ENCODE measurements at regions of chr3 and their contacts with region 1.

Region 1: DNA sequence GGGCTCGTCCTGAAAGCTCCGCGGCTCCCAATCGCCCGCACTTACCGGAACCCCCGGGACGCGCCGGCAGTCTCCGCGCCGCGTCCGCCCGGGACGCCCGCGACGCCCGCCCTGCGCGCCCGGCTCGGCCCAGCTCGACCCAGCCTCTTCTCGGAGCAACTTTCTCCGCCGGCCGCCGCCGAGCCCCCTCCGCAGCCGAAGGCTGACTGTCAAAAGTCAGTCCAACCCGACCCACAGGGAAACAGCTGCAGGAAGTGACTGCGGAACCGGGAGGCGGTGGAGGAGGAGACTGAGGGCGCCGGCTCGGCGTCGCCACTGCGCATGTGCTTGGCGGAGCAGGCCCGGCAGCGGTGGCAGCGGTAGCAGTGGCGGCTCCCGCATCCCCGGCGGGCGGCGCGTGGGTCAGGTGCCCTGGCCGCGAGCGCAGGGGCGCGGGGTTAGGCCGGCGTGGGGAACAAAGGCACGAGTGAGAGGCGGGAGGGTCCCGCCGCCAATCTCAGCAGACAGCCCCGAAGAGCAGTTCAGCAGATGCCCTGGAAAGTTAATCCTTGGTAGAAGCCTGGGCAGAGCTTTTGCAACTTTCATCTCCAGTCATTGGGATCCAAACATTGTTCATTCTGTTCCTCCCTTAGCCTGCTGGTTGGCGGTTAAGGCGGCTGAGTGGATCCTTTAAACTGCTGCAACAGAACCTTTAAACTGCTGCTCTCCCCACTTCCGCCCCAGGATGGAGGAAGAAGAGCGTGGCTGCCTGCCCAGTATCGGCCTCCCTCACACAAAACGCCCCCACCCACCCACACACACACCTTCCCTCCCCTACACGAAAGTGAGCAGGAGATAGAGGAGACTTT is at the start of gene ZMAT3:
- DNase-seq: peak; percentile 90
- ATAC-seq: peak; percentile 79
- H3K4me3 ChIP-seq: peak within 1 kb of the TSS; percentile 61 to 85 (median 80)
- H3K4me3 Mint-ChIP-seq: peak within 1 kb of the TSS; percentile 100
- H3K27ac ChIP-seq: peak within 1 kb of the TSS; percentile 89 to 92
- H3K27ac Mint-ChIP-seq: peak within 1 kb of the TSS; percentile 96
- H3K4me1 ChIP-seq: peaks cover 36 to 41% of the 10 kb centered on the region in 2 donors
- H3K4me1 Mint-ChIP-seq: peaks cover 63% of the 10 kb centered on the region
- H3K27me3 ChIP-seq: no peaks in the 10 kb centered on the region
- H3K27me3 Mint-ChIP-seq: no peaks in the 10 kb centered on the region
- CTCF ChIP-seq: no peak
- total RNA-seq, gene ZMAT3: 17.5 and 19.5 TPM in 2 replicates

Region 2: GRCh38 chr3:178982137-178982536 is 89.6 kb before region 1 on chr3:
- CTCF ChIA-PET with region 1: no interaction called
- POLR2A ChIA-PET with region 1: no interaction called
- intact Hi-C with region 1: no loop called
- DNase-seq: no peak
- ATAC-seq: peak; percentile 45
- H3K4me3 ChIP-seq: no peak overlapping the region
- H3K4me3 Mint-ChIP-seq: no peak overlapping the region
- H3K27ac ChIP-seq: no peak overlapping the region
- H3K27ac Mint-ChIP-seq: no peak overlapping the region
- H3K4me1 ChIP-seq: no peaks in the 10 kb centered on the region
- H3K4me1 Mint-ChIP-seq: peaks cover 2% of the 10 kb centered on the region
- H3K27me3 ChIP-seq: no peaks in the 10 kb centered on the region
- H3K27me3 Mint-ChIP-seq: no peaks in the 10 kb centered on the region
- CTCF ChIP-seq: no peak

Region 3: GRCh38 chr3:179046497-179047353 is 25.0 kb before region 1 on chr3:
- CTCF ChIA-PET with region 1: interaction called, 7 read pairs
- POLR2A ChIA-PET with region 1: no interaction called
- intact Hi-C with region 1: loop called (anchors 2 kb)
- DNase-seq: peak; percentile 54
- ATAC-seq: peak; percentile 85
- H3K4me3 ChIP-seq: no peak overlapping the region
- H3K4me3 Mint-ChIP-seq: peak overlapping the region; percentile 78
- H3K27ac ChIP-seq: peak overlapping the region; percentile 22 to 51
- H3K27ac Mint-ChIP-seq: peak overlapping the region; percentile 78
- H3K4me1 ChIP-seq: peaks cover 18 to 20% of the 10 kb centered on the region in 2 donors
- H3K4me1 Mint-ChIP-seq: peaks cover 53% of the 10 kb centered on the region
- H3K27me3 ChIP-seq: no peaks in the 10 kb centered on the region
- H3K27me3 Mint-ChIP-seq: no peaks in the 10 kb centered on the region
- CTCF ChIP-seq: no peak

Region 4: DNA sequence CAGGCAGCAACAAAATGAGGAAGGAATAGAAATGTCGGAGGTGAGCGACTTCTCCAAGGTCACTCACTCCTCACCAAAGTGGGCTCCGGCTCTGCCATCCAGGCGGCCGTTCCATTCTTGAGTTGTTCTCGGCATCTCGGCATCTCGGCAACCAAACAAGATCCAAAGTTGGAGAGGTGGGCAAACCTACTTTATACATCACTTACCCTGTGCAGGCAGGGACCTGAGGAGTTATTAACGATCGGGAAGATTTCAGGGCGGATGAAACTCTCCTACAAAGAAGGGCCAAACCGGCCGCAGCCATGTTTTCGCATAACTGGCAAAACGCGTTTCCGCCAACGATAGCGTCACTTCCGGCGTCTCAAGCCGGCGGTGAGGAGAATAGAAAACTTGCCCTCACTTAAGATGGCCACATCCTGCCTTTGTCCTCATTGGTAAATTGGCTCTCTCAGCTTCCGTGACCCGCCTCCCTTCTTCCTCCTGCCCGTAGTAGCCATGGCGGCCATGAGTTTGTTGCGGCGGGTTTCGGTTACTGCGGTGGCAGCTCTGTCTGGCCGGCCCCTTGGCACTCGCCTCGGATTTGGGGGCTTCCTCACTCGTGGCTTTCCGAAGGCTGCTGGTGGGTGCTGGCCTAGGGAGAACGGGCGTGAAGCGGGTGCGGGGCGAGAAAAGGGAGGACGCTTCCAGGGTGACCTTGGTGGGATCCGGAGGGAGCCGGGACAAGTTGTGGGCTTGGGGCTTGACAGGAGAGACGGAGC is 532.7 kb after region 1 on chr3 and contains the starts of genes MRPL47 and NDUFB5:
- CTCF ChIA-PET with region 1: no interaction called
- POLR2A ChIA-PET with region 1: no interaction called
- intact Hi-C with region 1: loop called (anchors 1 kb)
- DNase-seq: peak; percentile 96
- ATAC-seq: peak; percentile 98
- H3K4me3 ChIP-seq: peak within 1 kb of the TSS; percentile 65 to 96 (median 80)
- H3K4me3 Mint-ChIP-seq: peak within 1 kb of the TSS; percentile 99
- H3K27ac ChIP-seq: peak within 1 kb of the TSS; percentile 72 to 97
- H3K27ac Mint-ChIP-seq: peak within 1 kb of the TSS; percentile 98
- H3K4me1 ChIP-seq: peaks cover 39 to 44% of the 10 kb centered on the region in 2 donors
- H3K4me1 Mint-ChIP-seq: peaks cover 51% of the 10 kb centered on the region
- H3K27me3 ChIP-seq: no peaks in the 10 kb centered on the region
- H3K27me3 Mint-ChIP-seq: no peaks in the 10 kb centered on the region
- CTCF ChIP-seq: no peak
- total RNA-seq, gene MRPL47: 20.2 and 22.0 TPM in 2 replicates
- total RNA-seq, gene NDUFB5: 52.9 and 60.2 TPM in 2 replicates

Region 5: DNA sequence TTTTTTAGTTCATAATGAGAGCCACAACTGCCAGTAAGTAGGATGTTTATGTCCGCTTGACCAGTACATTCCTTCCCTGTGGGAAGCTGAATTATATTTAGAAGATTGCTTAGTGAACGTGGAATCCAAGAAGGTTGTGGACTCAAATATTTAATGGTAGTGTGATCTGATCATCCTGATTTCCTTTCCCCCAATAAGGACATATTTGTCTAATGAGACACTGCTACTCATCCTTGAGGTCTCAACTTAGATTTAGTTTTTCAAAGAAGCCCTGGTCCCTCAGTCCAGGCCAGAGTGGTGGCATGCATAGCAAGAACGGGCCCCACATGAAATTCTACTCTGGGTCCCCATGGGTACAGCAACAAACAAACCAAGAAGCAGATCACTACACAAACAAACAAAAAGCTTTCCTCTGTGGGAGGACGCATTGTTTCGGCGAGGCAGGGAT is 641.9 kb after region 1 on chr3:
- CTCF ChIA-PET with region 1: no interaction called
- POLR2A ChIA-PET with region 1: no interaction called
- intact Hi-C with region 1: no loop called
- DNase-seq: no peak
- ATAC-seq: no peak
- H3K4me3 ChIP-seq: no peak overlapping the region
- H3K4me3 Mint-ChIP-seq: no peak overlapping the region
- H3K27ac ChIP-seq: no peak overlapping the region
- H3K27ac Mint-ChIP-seq: no peak overlapping the region
- H3K4me1 ChIP-seq: no peaks in the 10 kb centered on the region
- H3K4me1 Mint-ChIP-seq: no peaks in the 10 kb centered on the region
- H3K27me3 ChIP-seq: no peaks in the 10 kb centered on the region
- H3K27me3 Mint-ChIP-seq: no peaks in the 10 kb centered on the region
- CTCF ChIP-seq: no peak